ENCODE measurements at regions of chr10 and their contacts with region 1.

Region 1: GRCh38 chr10:30591249-30591670 is 38.3 kb downstream of the LYZL2 start:
- DNase-seq: no peak
- ATAC-seq: peak; percentile 64

Region 2: GRCh38 chr10:30392564-30392990 is 198.7 kb before region 1 on chr10:
- intact Hi-C with region 1: loop called (anchors 5 kb)
- DNase-seq: peak; percentile 78
- ATAC-seq: peak; percentile 99

Region 3: DNA sequence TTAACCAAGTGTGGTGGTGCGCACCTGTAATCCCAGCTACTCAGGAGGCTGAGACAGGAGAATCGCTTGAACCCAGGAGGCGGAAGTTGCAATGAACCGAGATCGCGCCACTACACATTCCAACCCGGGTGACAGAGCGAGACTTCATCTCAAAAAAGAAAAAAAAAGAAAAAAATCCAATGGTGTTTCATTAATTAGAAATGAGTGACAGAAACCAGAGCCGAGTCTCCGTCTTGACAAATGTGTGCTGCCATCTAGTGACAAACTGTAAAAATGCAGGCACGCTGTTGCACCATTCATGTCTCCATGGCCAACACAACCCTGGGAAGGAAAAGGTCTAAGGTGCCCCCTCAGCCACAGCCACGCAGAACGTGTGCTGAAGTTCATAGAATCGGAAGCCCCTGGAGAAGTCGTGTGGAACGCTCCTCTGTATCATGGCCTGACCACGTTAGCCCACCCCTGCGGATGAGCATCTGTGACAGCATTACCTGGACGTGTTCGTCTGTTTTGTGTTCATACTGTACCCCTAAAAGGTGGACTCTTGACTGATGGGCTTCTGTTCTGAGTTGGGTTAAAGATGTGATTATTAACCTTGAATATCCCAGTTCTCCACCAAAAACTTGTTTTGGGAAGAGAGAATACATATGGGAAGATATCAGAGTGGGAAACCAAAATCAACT is 56.7 kb before region 1 on chr10:
- intact Hi-C with region 1: loop called (anchors 5 kb)
- DNase-seq: peak; percentile 46
- ATAC-seq: peak; percentile 76

Measured in left ventricle myocardium superior (tissue), 1 donor.